AG04450 (cell line): ENCODE measurements at regions of chr19 and their contacts with region 1.

Region 1: DNA sequence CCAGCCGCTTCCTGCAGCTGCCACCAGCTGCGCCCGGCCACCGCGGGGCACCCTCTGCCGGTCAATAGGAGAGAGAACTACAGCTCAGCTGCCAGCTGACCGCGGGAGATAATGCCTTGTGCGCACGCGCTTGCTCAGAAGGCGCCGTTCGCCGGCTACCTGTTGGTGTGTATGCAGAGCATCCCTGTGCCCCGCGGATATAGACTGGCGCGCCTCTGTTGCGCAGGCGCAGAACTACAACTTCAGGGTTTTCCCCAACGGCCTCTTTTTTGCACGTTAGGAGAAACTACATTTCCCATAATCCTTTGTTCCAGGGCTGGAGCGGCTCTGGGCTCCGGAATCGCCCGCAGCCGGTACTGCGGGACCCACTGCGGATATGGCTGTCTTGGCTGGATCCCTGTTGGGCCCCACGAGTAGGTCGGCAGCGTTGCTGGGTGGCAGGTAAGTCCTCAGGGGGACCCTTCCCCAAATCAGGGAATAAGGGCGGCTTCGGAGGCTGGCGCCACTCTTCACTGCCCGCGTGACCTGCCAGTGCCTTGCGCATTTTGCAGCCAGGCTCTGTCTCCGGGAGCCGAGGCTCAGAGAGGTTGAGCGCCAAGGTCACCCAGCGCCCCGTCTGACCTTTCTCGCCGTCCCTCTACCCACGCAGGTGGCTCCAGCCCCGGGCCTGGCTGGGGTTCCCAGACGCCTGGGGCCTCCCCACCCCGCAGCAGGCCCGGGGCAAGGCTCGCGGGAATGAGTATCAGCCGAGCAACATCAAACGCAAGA is at the start of gene MRPL34:
- DNase-seq: peak; percentile 99
- H3K4me3 ChIP-seq: peak within 1 kb of the TSS; percentile 81
- H3K27ac ChIP-seq: peak within 1 kb of the TSS; percentile 77
- H3K27me3 ChIP-seq: no peaks in the 10 kb centered on the region
- CTCF ChIP-seq: peak; percentile 82
- polyA plus RNA-seq, gene MRPL34: 23.2 and 24.3 TPM in 2 replicates

Region 2: GRCh38 chr19:17266975-17267788 is 38.5 kb before region 1 on chr19 and contains the start of gene BABAM1:
- CTCF ChIA-PET with region 1: no interaction called
- POLR2A ChIA-PET with region 1: no interaction called
- DNase-seq: peak; percentile 99
- H3K4me3 ChIP-seq: peak within 1 kb of the TSS; percentile 96
- H3K27ac ChIP-seq: peak within 1 kb of the TSS; percentile 52
- H3K27me3 ChIP-seq: no peaks in the 10 kb centered on the region
- CTCF ChIP-seq: no peak
- polyA plus RNA-seq, gene BABAM1: 92.0 and 98.6 TPM in 2 replicates

Region 3: DNA sequence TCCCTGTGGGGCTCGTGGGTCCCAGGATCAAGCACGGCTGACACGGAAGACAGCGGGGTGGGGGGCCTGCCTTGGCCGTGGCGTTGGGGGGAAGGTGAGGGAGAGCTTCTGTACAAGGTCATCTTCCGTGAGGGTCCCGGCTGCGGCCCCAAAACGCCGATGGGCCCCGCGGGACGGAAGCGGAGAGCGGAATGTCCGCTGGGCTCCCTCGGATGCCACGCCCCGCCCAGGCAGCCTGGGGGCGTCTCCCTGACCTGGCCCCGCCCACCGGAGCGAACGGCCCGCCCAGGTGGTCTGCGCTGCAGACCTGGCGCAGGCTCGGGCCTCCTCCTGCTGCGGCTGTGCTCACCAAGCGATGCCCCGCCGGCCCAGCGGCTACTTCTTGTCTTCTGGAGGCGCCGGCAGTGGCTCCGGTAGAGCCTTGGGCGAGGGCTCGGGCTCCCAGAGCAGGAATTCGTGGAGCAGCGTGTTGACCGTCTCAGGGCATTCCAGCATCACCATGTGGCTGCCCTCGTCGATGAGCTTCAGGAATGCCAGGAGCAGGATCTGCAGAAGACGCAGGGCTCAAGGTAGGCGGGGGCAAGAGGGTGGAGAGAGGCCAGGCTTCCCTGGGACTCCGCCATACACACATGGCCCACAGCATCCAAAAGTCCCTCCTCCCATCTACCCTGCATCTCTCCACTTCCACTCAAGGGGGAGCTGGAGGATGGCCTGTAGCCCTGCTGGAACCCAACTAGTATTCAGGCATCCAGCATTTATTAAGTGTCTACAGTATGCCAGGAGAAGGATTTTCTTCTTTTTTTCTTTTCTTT is 13.2 kb before region 1 on chr19:
- CTCF ChIA-PET with region 1: interaction called, 16 read pairs
- POLR2A ChIA-PET with region 1: interaction called, 11 read pairs
- DNase-seq: peak; percentile 59
- H3K4me3 ChIP-seq: peak overlapping the region; percentile 63
- H3K27ac ChIP-seq: peak overlapping the region; percentile 81
- H3K27me3 ChIP-seq: no peaks in the 10 kb centered on the region
- CTCF ChIP-seq: peak; percentile 75

Region 4: DNA sequence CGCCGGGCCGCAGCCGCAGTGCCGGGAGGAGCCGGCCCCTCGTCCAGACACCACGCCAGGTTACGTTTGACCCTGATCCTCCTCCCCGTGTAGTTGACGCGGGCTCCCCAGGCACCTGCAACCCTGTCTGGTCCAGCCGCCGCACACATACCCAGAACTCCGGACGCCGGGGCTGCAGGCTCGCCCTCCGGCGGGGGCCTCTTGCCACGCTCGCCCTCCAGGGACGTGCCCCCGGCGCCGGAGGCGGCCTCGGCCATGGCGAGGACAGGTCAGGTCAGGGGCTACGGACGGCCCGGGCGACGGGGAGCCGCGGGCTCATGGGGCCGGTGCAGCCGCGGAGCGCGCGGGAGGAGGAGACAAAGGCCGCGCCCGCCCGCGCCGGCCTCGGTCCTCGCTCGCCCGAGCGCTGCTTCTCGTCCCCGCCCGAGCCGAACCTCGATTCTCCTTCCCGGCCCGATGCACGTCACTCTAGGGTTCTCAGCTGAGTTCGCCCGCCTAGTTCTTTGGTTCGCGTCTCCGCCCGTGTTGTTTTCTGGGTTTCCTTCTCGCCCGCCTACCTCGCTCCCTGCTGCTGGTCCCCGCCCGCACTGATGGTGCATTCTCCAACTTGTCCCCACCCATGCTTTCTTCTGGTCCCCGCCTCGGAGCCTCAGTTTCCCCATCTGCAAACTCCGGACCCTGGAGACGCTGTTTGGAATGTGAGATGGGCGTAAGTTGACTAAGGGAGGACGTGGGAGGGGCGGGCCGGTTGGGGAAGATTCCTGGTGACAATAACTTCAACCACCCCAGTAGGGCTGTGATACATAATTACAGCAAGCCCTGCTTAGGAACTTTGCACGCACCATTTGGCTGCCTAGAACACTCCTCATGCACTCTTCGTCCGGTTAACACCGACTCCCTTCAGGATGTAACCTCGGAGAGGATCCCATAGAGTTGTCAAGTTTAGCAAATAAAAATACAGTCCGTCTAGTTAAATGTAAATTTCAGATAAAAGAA is 29.0 kb after region 1 on chr19 and contains the start of gene ANO8:
- CTCF ChIA-PET with region 1: no interaction called
- POLR2A ChIA-PET with region 1: interaction called, 13 read pairs
- DNase-seq: peak; percentile 96
- H3K4me3 ChIP-seq: peak within 1 kb of the TSS; percentile 72
- H3K27ac ChIP-seq: no peak within 1 kb of the TSS
- H3K27me3 ChIP-seq: peaks cover 2% of the 10 kb centered on the region
- CTCF ChIP-seq: no peak
- polyA plus RNA-seq, gene ANO8: 1.8 and 2.0 TPM in 2 replicates